ENCODE measurements at regions of chr2 and their contacts with region 1.

Region 1: GRCh38 chr2:1631804-1632348 is 112.4 kb downstream of the PXDN start:
- DNase-seq: no peak
- H3K4me3 ChIP-seq: no peak overlapping the region
- H3K27ac ChIP-seq: no peak overlapping the region
- H3K4me1 ChIP-seq: peaks cover 16% of the 10 kb centered on the region
- H3K27me3 ChIP-seq: no peaks in the 10 kb centered on the region
- CTCF ChIP-seq: no peak

Region 2: DNA sequence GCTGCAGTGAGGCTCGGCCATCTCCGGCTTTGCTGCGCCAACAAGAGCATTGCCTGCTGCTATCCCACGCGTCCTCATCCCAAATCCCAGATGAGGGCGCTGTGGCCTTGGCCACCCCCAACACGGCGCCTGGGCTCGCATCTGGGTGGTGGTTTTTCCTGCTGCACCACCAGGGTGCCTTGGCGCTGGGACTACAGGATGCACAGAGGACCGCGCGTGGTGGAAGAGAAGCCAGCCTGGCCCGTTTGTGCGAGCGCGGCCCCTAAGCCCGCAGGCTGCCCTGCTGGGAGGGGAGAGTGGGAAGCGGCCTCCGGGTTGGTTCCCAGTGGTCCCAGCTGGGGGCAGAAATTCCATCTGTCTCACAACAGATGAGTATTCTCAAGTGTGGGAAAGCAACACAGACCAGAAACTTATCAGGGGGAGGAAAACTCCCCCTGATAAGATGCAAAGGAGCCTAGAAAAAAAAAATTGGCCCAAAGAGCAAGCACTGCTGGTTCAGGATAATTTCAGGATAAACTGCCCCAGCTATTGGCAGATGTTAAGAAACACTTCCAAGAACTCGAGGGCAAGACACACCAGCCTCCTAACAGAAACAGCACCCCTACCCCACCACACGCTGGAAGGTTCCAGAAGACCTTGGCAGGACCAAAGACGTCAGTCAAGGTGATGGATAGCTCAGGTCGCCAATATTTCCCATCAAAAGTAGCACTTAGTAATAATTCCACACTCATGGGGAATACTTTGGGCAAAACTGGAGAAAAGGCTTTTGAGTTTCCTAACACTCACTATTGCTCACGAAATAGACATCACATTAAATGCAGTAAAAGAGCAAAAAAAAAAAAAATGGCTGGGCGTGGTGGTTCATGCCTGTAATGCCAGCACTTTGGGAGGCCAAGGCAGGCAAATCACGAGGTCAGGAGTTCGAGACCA is 39.6 kb before region 1 on chr2:
- CTCF ChIA-PET with region 1: no interaction called
- dilution Hi-C with region 1: loop called (anchors 5 kb)
- in situ Hi-C with region 1: no loop called
- intact Hi-C with region 1: no loop called
- DNase-seq: peak; percentile 31
- H3K4me3 ChIP-seq: no peak overlapping the region
- H3K27ac ChIP-seq: no peak overlapping the region
- H3K4me1 ChIP-seq: peaks cover 41% of the 10 kb centered on the region
- H3K27me3 ChIP-seq: no peaks in the 10 kb centered on the region
- CTCF ChIP-seq: peak in 1 of 2 donors; percentile 23

Measured in mammary epithelial cell (primary cell).